Activated CD4-positive, alpha-beta memory T cell treated with anti-CD3 and anti-CD28 coated beads, Interleukin-2, amount 10 ng/mL, durations not matched to agents 7 days and 5 days (primary cell): ENCODE measurements at regions of chr19 and their contacts with region 1.

Region 1: GRCh38 chr19:10332955-10333757 is at the start of gene RAVER1:
- DNase-seq: peak; percentile 98
- H3K4me3 Mint-ChIP-seq: peak within 1 kb of the TSS; percentile 84
- H3K27ac Mint-ChIP-seq: peak within 1 kb of the TSS; percentile 90
- H3K4me1 Mint-ChIP-seq: peaks cover 40% of the 10 kb centered on the region
- H3K27me3 Mint-ChIP-seq: no peaks in the 10 kb centered on the region
- total RNA-seq, gene RAVER1: 62.1 to 68.6 TPM

Region 2: DNA sequence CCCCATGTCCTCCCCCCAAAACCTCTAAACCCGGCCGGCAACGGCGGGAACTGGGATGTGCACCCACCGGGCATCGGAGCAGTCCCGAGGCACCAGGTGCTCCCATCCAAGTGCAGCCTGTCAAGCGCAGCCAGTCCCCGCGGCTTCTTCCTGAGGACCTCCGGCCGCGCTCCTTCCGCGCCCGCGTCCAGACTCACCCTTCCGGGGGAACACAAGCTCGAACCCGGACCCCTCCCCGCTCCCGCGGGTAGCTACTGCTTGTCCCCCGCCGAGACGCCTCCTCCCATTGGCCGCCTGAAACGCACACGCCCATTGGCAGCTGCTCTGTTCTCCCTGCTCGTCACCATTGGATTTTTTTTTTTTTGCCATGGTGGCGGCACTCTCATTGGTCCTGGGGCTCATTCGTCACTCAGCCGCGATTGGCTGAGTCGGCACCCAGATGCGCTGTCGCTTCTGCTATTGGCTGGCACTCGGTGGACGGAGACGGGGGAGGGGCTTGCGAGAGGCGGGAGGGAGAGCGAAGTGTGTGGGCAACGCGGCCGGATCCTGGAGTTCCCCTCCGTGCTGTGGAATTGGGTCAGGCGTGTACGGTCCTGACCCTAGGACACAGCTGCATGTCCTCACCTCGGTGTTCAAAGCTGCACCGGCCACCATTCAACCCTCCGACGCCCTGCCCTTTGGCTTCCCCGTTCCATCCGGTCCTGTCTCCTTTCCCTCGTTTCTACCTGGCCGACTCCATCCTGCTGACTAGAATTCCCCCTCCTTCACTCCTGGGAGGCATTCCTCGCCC is 47.4 kb after region 1 on chr19 and contains the start of gene TYK2:
- CTCF ChIA-PET with region 1: interaction called, 5 read pairs
- POLR2A ChIA-PET with region 1: interaction called, 12 read pairs
- DNase-seq: peak; percentile 95
- H3K4me3 Mint-ChIP-seq: peak within 1 kb of the TSS; percentile 95
- H3K27ac Mint-ChIP-seq: peak within 1 kb of the TSS; percentile 90
- H3K4me1 Mint-ChIP-seq: peaks cover 27% of the 10 kb centered on the region
- H3K27me3 Mint-ChIP-seq: no peaks in the 10 kb centered on the region
- total RNA-seq, gene TYK2: 226 to 243 TPM